ENCODE measurements at regions of chr5 and their contacts with region 1.

Region 1: DNA sequence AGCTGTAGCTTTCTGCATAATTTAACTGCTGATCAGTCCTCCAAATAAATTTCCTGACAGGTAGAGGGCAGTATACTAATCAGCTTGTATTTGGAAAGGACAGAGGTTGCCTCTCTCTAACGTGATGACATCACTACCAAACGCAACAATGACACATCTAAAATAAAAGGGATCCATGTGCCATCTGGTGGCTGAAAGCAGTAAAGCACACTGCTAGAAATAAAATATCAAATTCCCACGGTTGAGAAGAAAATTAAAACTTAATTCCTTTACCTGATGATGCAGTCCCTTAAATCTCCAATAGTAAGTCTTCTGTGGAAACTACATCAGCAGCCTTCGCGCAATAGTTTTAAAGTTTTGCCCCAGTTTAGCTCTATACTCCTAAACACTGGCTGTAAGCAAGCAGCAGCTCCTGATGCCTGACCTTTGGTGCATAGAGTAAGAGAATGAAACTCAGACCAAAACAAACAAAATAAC is 54.5 kb downstream of the DIAPH1 start:
- DNase-seq: peak; percentile 56 to 62
- H3K4me3 ChIP-seq: no peak overlapping the region
- H3K27ac ChIP-seq: peak overlapping the region; percentile 26; the same call in 1 of the 2 replicates
- H3K4me1 ChIP-seq: peaks cover 0 to 7% (median 3%) of the 10 kb centered on the region in 4 experiments; a peak in 4 of 7 replicates
- H3K27me3 ChIP-seq: no peaks in the 10 kb centered on the region
- CTCF ChIP-seq: peak in 2 of 3 experiments; percentile 96; a peak in 3 of 4 replicates
- EP300 ChIP-seq: peak in 1 of 2 experiments; percentile 89; a peak in 2 of 3 replicates
- POLR2A ChIP-seq: no peak
- RAD21 ChIP-seq: peak; percentile 55 to 65

Region 2: GRCh38 chr5:141199359-141200235 is 364.7 kb before region 1 on chr5 and contains the start of gene PCDHB11:
- CTCF ChIA-PET with region 1: interaction called, 10 read pairs
- POLR2A ChIA-PET with region 1: no interaction called
- DNase-seq: no peak
- H3K4me3 ChIP-seq: peak within 1 kb of the TSS in 1 of 4 experiments; percentile 25; a peak in 2 of 8 replicates
- H3K27ac ChIP-seq: no peak within 1 kb of the TSS
- H3K4me1 ChIP-seq: no peaks in the 10 kb centered on the region
- H3K27me3 ChIP-seq: no peaks in the 10 kb centered on the region
- CTCF ChIP-seq: peak in 2 of 3 experiments; percentile 55 to 66; a peak in 3 of 4 replicates
- EP300 ChIP-seq: no peak
- POLR2A ChIP-seq: no peak
- RAD21 ChIP-seq: peak; percentile 68 to 73
- total RNA-seq, gene PCDHB11: 0.86 and 1.4 TPM in 2 replicates

Region 3: GRCh38 chr5:141349917-141350619 is 214.2 kb before region 1 on chr5 and contains the start of gene PCDHGB1:
- CTCF ChIA-PET with region 1: interaction called, 28 read pairs
- POLR2A ChIA-PET with region 1: interaction called, 3 read pairs
- DNase-seq: peak in 1 of 2 experiments; percentile 83
- H3K4me3 ChIP-seq: peak within 1 kb of the TSS; percentile 17 to 53 (median 31); a peak in 7 of 8 replicates
- H3K27ac ChIP-seq: no peak within 1 kb of the TSS
- H3K4me1 ChIP-seq: peaks cover 0 to 5% (median under 1%) of the 10 kb centered on the region in 4 experiments; a peak in 1 of 7 replicates
- H3K27me3 ChIP-seq: no peaks in the 10 kb centered on the region
- CTCF ChIP-seq: peak; percentile 69 to 86 (median 75)
- EP300 ChIP-seq: no peak
- POLR2A ChIP-seq: peak in 1 of 2 experiments; percentile 65; a peak in 1 of 3 replicates
- RAD21 ChIP-seq: peak; percentile 74 to 81
- total RNA-seq, gene PCDHGB1: 2.8 and 3.9 TPM in 2 replicates

Region 4: GRCh38 chr5:141420855-141421496 is 143.3 kb before region 1 on chr5 and contains the start of gene PCDHGA11:
- CTCF ChIA-PET with region 1: interaction called, 34 read pairs
- POLR2A ChIA-PET with region 1: interaction called, 6 read pairs
- DNase-seq: peak in 1 of 2 experiments; percentile 91
- H3K4me3 ChIP-seq: peak within 1 kb of the TSS; percentile 15 to 52 (median 32); a peak in 6 of 8 replicates
- H3K27ac ChIP-seq: no peak within 1 kb of the TSS
- H3K4me1 ChIP-seq: no peaks in the 10 kb centered on the region; a peak in 1 of 7 replicates
- H3K27me3 ChIP-seq: peaks cover 0 to 12% (median 6%) of the 10 kb centered on the region in 4 experiments; a peak in 4 of 7 replicates
- CTCF ChIP-seq: peak; percentile 59 to 77 (median 75)
- EP300 ChIP-seq: no peak
- POLR2A ChIP-seq: no peak
- RAD21 ChIP-seq: peak; percentile 88 to 90
- total RNA-seq, gene PCDHGA11: 8.2 and 8.3 TPM in 2 replicates

Region 5: GRCh38 chr5:141512390-141512910 is 51.8 kb before region 1 on chr5:
- CTCF ChIA-PET with region 1: interaction called, 74 read pairs
- POLR2A ChIA-PET with region 1: interaction called, 3 read pairs
- DNase-seq: peak; percentile 93 to 99
- H3K4me3 ChIP-seq: peak overlapping the region; percentile 61 to 83 (median 76)
- H3K27ac ChIP-seq: no peak overlapping the region
- H3K4me1 ChIP-seq: peaks cover 7 to 35% (median 19%) of the 10 kb centered on the region in 4 experiments
- H3K27me3 ChIP-seq: no peaks in the 10 kb centered on the region
- CTCF ChIP-seq: peak in 2 of 3 experiments; percentile 97 to 98; a peak in 3 of 4 replicates
- EP300 ChIP-seq: no peak; a peak in 1 of 3 replicates
- POLR2A ChIP-seq: peak in 1 of 2 experiments; percentile 60; a peak in 2 of 3 replicates
- RAD21 ChIP-seq: peak; percentile 80 to 86

Region 6: DNA sequence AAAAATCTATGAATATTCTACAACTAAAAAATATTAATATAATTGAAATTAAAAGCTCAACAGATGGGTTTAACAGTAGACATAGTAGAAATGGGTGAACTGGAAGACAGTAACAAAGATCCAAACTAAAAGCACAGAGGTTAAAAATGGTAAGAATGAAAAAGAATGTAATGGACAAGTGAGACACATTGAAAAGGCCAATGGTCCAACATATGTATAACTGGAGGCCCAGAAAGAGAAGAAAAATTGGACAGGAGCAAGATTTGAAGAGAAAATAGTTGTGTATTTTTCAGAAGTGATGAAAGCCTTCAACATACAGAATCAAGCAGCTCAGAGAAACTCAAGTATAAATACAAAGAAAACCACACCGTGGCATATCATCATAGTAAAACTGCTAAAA is 16.8 kb before region 1 on chr5:
- CTCF ChIA-PET with region 1: interaction called, 21 read pairs
- POLR2A ChIA-PET with region 1: interaction called, 3 read pairs
- DNase-seq: no peak
- H3K4me3 ChIP-seq: no peak overlapping the region; a peak in 1 of 8 replicates
- H3K27ac ChIP-seq: no peak overlapping the region
- H3K4me1 ChIP-seq: no peaks in the 10 kb centered on the region
- H3K27me3 ChIP-seq: no peaks in the 10 kb centered on the region
- CTCF ChIP-seq: no peak
- EP300 ChIP-seq: no peak
- POLR2A ChIP-seq: no peak
- RAD21 ChIP-seq: no peak